Naive thymus-derived CD4-positive, alpha-beta T cell (primary cell): ENCODE measurements at regions of chr2 and their contacts with region 1.

Region 1: GRCh38 chr2:20350753-20351554 is at the start of gene PUM2:
- DNase-seq: peak; percentile 93 to 98 (median 97)
- ATAC-seq: peak; percentile 92
- H3K4me3 ChIP-seq: peak within 1 kb of the TSS; percentile 86
- H3K4me3 Mint-ChIP-seq: peak within 1 kb of the TSS in 3 of 10 donors; percentile 86 to 94 (median 93)
- H3K27ac ChIP-seq: peak within 1 kb of the TSS; percentile 94
- H3K27ac Mint-ChIP-seq: peak within 1 kb of the TSS in 6 of 9 donors; percentile 84 to 95 (median 88)
- H3K4me1 ChIP-seq: peaks cover 32 to 47% of the 10 kb centered on the region in 2 donors
- H3K4me1 Mint-ChIP-seq: peaks cover 28 to 45% (median 37%) of the 10 kb centered on the region in 7 donors
- H3K27me3 ChIP-seq: no peaks in the 10 kb centered on the region
- H3K27me3 Mint-ChIP-seq: no peaks in the 10 kb centered on the region
- total RNA-seq, gene PUM2: 105 to 178 (median 137) TPM

Region 2: DNA sequence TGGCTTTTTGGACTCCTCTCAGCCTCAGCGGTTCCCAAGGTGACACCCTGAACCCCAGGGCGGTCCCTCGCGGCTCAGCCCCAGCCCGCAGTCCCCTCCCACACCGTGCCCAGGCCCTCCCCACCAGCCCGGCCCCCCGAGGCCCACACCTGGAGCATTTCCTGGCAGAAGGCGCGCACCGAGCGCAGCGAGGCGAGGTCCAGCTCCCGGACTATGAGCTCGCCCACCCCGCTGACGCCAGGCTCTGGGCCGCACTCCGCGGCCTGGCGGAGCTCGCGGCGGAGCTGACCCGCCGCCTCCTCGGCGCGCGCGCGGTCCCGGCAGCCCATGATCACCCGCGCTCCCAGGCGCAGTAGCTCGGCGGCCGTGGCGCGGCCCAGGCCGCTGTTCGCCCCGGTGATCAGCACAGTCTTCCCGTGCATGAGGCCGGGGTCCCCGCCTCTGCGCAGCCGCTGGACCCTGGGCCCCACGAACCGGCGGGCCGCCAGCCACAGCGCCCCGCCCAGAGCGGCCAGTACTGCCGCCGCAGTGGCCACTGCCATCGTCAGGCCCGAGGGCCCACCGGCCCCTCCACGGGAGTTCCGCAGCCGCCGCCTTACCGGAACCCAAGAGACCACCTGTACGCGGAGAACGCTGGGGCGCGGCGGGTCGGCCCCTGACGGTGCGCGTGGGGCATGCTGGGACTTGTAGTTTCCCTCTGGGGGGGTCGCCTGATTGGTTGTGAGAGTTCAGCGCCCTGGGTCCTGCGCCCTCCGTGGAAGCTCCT is 1790.7 kb before region 1 on chr2 and contains the start of gene RDH14:
- CTCF ChIA-PET with region 1: no interaction called
- POLR2A ChIA-PET with region 1: interaction called, 4 read pairs
- intact Hi-C with region 1: loop called in 1 of 2 experiments (anchors 1 kb)
- DNase-seq: peak; percentile 83 to 93 (median 92)
- ATAC-seq: peak; percentile 94
- H3K4me3 ChIP-seq: peak within 1 kb of the TSS; percentile 71
- H3K4me3 Mint-ChIP-seq: peak within 1 kb of the TSS; percentile 86 to 96 (median 92)
- H3K27ac ChIP-seq: peak within 1 kb of the TSS; percentile 94
- H3K27ac Mint-ChIP-seq: peak within 1 kb of the TSS; percentile 92 to 98 (median 96)
- H3K4me1 ChIP-seq: peaks cover 6 to 16% of the 10 kb centered on the region in 2 donors
- H3K4me1 Mint-ChIP-seq: peaks cover 19 to 66% (median 52%) of the 10 kb centered on the region in 7 donors
- H3K27me3 ChIP-seq: no peaks in the 10 kb centered on the region
- H3K27me3 Mint-ChIP-seq: no peaks in the 10 kb centered on the region
- total RNA-seq, gene RDH14: 9.4 to 20.9 (median 14.9) TPM

Region 3: DNA sequence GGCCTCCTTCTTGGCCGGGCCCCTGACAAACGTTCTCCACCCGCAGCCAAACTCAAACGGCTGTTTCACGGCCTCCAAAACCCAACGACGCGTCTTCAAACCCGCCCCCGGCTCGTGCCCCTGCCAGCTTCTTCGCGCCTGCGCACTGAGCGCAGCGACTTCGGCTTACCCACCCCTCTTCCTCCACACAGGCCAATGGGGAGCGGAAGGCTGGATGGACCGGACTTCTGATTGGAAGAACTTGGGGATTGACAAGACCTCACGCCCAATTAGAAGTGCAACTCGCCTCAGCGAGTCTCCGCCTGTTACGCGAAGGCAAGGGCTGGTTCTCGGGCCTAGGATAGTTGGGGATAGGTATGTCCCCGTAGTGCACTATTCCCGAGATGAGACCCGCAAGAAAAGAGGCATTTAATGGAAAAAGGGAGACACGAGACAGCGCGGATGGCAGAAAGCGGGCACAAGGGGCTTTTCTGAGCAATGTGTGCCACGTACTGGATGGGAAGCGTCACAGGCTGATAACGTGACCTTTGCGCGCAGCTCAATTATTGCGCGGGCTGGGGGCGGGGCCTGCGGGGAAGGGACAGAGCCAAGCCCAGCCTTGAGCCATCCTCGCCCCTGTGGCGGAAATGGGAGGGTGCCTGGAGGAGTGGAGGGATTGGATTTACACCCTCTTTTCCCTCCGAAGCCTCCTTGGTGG is 299.3 kb before region 1 on chr2 and contains the start of gene LAPTM4A:
- CTCF ChIA-PET with region 1: no interaction called
- POLR2A ChIA-PET with region 1: interaction called, 3 read pairs
- intact Hi-C with region 1: loop called (anchors 1 kb)
- DNase-seq: peak; percentile 93 to 99 (median 98)
- ATAC-seq: peak; percentile 95
- H3K4me3 ChIP-seq: peak within 1 kb of the TSS; percentile 94
- H3K4me3 Mint-ChIP-seq: no peak within 1 kb of the TSS
- H3K27ac ChIP-seq: peak within 1 kb of the TSS; percentile 93
- H3K27ac Mint-ChIP-seq: no peak within 1 kb of the TSS
- H3K4me1 ChIP-seq: peaks cover 16 to 20% of the 10 kb centered on the region in 2 donors
- H3K4me1 Mint-ChIP-seq: peaks cover 25 to 34% (median 31%) of the 10 kb centered on the region in 7 donors
- H3K27me3 ChIP-seq: no peaks in the 10 kb centered on the region
- H3K27me3 Mint-ChIP-seq: peaks cover 14 to 19% (median 17%) of the 10 kb centered on the region in 5 donors
- total RNA-seq, gene LAPTM4A: 32.3 to 78.2 (median 48.7) TPM

Region 4: DNA sequence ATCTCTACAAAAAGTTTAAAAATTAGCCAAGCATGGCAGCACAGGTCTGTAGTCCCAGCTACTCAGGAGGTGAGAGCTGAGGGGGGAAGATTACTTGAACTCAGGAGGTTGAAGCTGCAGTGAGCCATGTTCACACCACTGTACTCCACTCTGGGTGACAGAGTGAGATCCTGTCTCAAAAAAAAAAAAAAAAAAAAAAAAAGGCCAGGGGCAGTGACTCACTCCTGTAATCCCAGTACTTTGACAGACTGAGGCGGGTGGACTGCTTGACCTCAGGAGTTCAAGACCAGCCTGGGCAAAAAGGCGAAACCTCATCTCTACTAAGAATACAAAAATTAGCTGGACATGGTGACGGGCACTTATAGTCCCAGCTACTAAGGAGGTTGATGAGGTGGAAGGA is 37.3 kb before region 1 on chr2:
- CTCF ChIA-PET with region 1: interaction called, 4 read pairs
- POLR2A ChIA-PET with region 1: interaction called, 8 read pairs
- intact Hi-C with region 1: loop called in 1 of 2 experiments (anchors 5 kb)
- DNase-seq: no peak
- ATAC-seq: no peak
- H3K4me3 ChIP-seq: no peak overlapping the region
- H3K4me3 Mint-ChIP-seq: no peak overlapping the region
- H3K27ac ChIP-seq: no peak overlapping the region
- H3K27ac Mint-ChIP-seq: peak overlapping the region in 2 of 9 donors; percentile 10 to 25
- H3K4me1 ChIP-seq: peaks cover 10 to 14% of the 10 kb centered on the region in 2 donors
- H3K4me1 Mint-ChIP-seq: peaks cover 7 to 54% (median 43%) of the 10 kb centered on the region in 7 donors
- H3K27me3 ChIP-seq: no peaks in the 10 kb centered on the region
- H3K27me3 Mint-ChIP-seq: no peaks in the 10 kb centered on the region

Region 5: GRCh38 chr2:20365249-20365817 is 14.4 kb after region 1 on chr2:
- CTCF ChIA-PET with region 1: interaction called, 5 read pairs
- POLR2A ChIA-PET with region 1: interaction called, 5 read pairs
- intact Hi-C with region 1: loop called in 1 of 2 experiments (anchors 1 kb)
- DNase-seq: peak in 1 of 9 donors; percentile 57
- ATAC-seq: peak; percentile 27
- H3K4me3 ChIP-seq: no peak overlapping the region
- H3K4me3 Mint-ChIP-seq: peak overlapping the region in 1 of 10 donors; percentile 71
- H3K27ac ChIP-seq: no peak overlapping the region
- H3K27ac Mint-ChIP-seq: peak overlapping the region in 1 of 9 donors; percentile 79
- H3K4me1 ChIP-seq: no peaks in the 10 kb centered on the region
- H3K4me1 Mint-ChIP-seq: peaks cover 0 to 28% (median 0%) of the 10 kb centered on the region in 7 donors
- H3K27me3 ChIP-seq: no peaks in the 10 kb centered on the region
- H3K27me3 Mint-ChIP-seq: peaks cover 0 to 12% (median 7%) of the 10 kb centered on the region in 5 donors

Region 6: DNA sequence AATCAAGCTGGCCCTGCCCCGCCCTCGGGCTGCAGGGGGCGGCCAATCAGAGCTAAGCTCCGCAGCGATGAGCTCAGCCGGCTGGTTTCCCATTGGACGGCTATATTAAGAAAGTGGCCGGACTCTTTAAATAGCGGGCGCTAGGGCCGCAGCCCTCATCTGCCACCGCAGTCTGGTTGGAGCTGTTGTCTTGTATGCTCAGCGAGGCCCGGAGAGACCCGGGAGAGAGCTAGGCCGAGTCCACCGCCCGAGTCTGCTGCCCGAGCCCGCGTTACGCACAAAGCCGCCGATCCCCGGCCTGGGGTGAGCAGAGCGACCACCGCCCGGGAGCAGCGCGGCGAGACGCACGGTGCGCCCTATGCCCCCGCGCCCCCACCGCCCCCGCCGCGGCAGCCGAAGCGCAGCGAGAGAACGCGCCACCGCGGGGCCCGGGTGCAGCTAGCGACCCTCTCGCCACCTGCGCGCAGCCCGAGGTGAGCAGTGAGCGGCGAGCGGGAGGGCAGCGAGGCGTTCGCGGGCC is 96.0 kb after region 1 on chr2 and contains the start of gene RHOB:
- CTCF ChIA-PET with region 1: no interaction called
- POLR2A ChIA-PET with region 1: interaction called, 16 read pairs
- intact Hi-C with region 1: loop called (anchors 1 to 2 kb)
- DNase-seq: peak; percentile 75 to 90 (median 82)
- ATAC-seq: peak; percentile 97
- H3K4me3 ChIP-seq: peak within 1 kb of the TSS; percentile 71
- H3K4me3 Mint-ChIP-seq: peak within 1 kb of the TSS; percentile 77 to 88 (median 81)
- H3K27ac ChIP-seq: peak within 1 kb of the TSS; percentile 59
- H3K27ac Mint-ChIP-seq: peak within 1 kb of the TSS in 5 of 9 donors; percentile 11 to 81 (median 51)
- H3K4me1 ChIP-seq: peaks cover 6 to 12% of the 10 kb centered on the region in 2 donors
- H3K4me1 Mint-ChIP-seq: peaks cover 0 to 7% (median 4%) of the 10 kb centered on the region in 7 donors
- H3K27me3 ChIP-seq: peaks cover 0 to 3% of the 10 kb centered on the region in 2 donors
- H3K27me3 Mint-ChIP-seq: peaks cover 0 to 68% (median 13%) of the 10 kb centered on the region in 5 donors
- total RNA-seq, gene RHOB: 2.5 to 244 (median 11.7) TPM

Region 7: DNA sequence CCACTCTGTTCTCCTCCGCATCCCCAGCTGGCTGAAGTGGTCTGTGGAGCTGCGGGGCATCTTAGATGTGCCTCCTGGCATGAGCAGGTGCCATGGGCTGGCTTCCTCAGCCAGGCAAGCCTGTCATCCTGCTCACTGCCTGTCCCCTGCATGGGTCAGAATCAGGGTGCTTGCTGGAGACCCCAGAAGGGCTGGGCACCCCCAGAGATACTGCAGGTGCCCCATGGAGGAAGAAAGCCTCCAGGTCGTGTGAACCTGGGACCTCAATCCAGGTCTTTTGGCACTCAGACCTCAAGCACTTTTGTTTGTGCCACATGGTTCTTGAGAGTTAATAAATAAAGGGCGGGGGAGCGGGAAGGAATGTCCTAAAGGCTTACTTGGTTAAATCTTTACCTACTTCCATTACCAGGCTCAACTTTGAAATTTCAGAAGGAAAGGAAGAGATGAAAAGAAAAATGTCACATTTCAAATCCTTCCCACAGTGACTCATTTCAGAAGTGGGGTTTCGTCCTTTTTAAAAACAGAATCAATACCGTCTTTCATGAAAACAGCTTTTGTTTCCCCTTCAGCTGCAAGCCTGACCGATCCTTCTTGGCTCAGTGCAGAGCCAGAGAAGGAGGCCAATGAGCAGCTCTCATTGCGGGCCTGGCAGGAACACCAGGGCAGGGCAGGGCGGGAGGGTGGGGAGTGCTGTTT is 165.8 kb after region 1 on chr2:
- CTCF ChIA-PET with region 1: no interaction called
- POLR2A ChIA-PET with region 1: no interaction called
- intact Hi-C with region 1: no loop called
- DNase-seq: no peak
- ATAC-seq: no peak
- H3K4me3 ChIP-seq: no peak overlapping the region
- H3K4me3 Mint-ChIP-seq: no peak overlapping the region
- H3K27ac ChIP-seq: no peak overlapping the region
- H3K27ac Mint-ChIP-seq: no peak overlapping the region
- H3K4me1 ChIP-seq: no peaks in the 10 kb centered on the region
- H3K4me1 Mint-ChIP-seq: peaks cover 0 to 7% (median 0%) of the 10 kb centered on the region in 7 donors
- H3K27me3 ChIP-seq: no peaks in the 10 kb centered on the region
- H3K27me3 Mint-ChIP-seq: peaks cover 0 to 5% (median 0%) of the 10 kb centered on the region in 5 donors

Region 8: DNA sequence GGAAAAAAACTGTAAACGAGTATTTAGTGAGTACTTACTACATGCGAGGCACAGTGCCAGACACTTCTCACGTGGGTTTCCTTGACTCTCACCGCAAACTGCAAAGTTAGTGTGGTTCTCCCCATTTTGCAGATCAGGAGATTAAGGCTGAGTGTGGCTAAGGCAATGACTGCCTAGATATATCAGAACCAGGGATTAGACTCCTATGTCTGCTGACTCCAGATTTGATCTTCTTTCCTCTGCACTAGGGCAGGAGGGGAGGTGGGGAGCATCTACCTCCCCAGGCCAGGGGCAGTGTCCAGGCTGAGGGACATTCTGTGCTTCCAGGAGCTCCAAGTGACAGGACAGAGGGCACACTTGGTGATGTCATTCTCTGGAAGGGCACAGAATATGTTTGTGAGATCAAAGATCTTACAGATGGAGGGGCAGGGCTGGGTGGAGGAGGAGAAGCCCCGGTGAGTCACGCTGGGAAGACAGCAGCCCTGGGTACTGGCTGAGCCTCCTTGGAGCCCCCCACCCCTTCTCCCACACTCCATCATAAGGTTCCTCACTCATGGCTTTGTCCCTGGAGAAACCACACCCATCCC is 188.3 kb after region 1 on chr2:
- CTCF ChIA-PET with region 1: no interaction called
- POLR2A ChIA-PET with region 1: no interaction called
- intact Hi-C with region 1: no loop called
- DNase-seq: no peak
- ATAC-seq: peak; percentile 7
- H3K4me3 ChIP-seq: no peak overlapping the region
- H3K4me3 Mint-ChIP-seq: no peak overlapping the region
- H3K27ac ChIP-seq: no peak overlapping the region
- H3K27ac Mint-ChIP-seq: no peak overlapping the region
- H3K4me1 ChIP-seq: no peaks in the 10 kb centered on the region
- H3K4me1 Mint-ChIP-seq: no peaks in the 10 kb centered on the region
- H3K27me3 ChIP-seq: no peaks in the 10 kb centered on the region
- H3K27me3 Mint-ChIP-seq: peaks cover 0 to 10% (median 0%) of the 10 kb centered on the region in 5 donors

Region 9: GRCh38 chr2:20650880-20651730 is 300.2 kb after region 1 on chr2 and contains the start of gene HS1BP3:
- CTCF ChIA-PET with region 1: interaction called, 4 read pairs
- POLR2A ChIA-PET with region 1: interaction called, 10 read pairs
- intact Hi-C with region 1: loop called (anchors 1 kb)
- DNase-seq: peak; percentile 87 to 99 (median 94)
- ATAC-seq: peak; percentile 97
- H3K4me3 ChIP-seq: peak within 1 kb of the TSS; percentile 80
- H3K4me3 Mint-ChIP-seq: peak within 1 kb of the TSS; percentile 86 to 95 (median 90)
- H3K27ac ChIP-seq: peak within 1 kb of the TSS; percentile 86
- H3K27ac Mint-ChIP-seq: peak within 1 kb of the TSS; percentile 90 to 99 (median 96)
- H3K4me1 ChIP-seq: peaks cover 16 to 20% of the 10 kb centered on the region in 2 donors
- H3K4me1 Mint-ChIP-seq: peaks cover 22 to 42% (median 39%) of the 10 kb centered on the region in 7 donors
- H3K27me3 ChIP-seq: no peaks in the 10 kb centered on the region
- H3K27me3 Mint-ChIP-seq: peaks cover 0 to 11% (median 0%) of the 10 kb centered on the region in 5 donors
- total RNA-seq, gene HS1BP3: 12.0 to 19.0 (median 18.3) TPM